ENCODE measurements at regions of chr17 and their contacts with region 1.

Region 1: GRCh38 chr17:77444984-77445759 is 304.4 kb downstream of the SEC14L1 start:
- DNase-seq: peak; percentile 68 to 96 (median 94)
- ATAC-seq: peak; percentile 84
- H3K4me3 ChIP-seq: peak overlapping the region; percentile 57
- H3K4me3 Mint-ChIP-seq: peak overlapping the region; percentile 77 to 98 (median 86)
- H3K27ac ChIP-seq: peak overlapping the region; percentile 92
- H3K27ac Mint-ChIP-seq: peak overlapping the region; percentile 93 to 100 (median 99)
- H3K4me1 ChIP-seq: peaks cover 90 to 91% of the 10 kb centered on the region in 2 donors
- H3K4me1 Mint-ChIP-seq: peaks cover 73 to 99% (median 93%) of the 10 kb centered on the region in 7 donors
- H3K27me3 ChIP-seq: no peaks in the 10 kb centered on the region
- H3K27me3 Mint-ChIP-seq: no peaks in the 10 kb centered on the region

Region 2: GRCh38 chr17:77404812-77405581 is 40.2 kb before region 1 on chr17:
- CTCF ChIA-PET with region 1: interaction called, 11 read pairs
- POLR2A ChIA-PET with region 1: interaction called, 3,353 read pairs
- intact Hi-C with region 1: loop called (anchors 1 to 2 kb)
- DNase-seq: peak; percentile 48 to 86 (median 84)
- ATAC-seq: peak; percentile 88
- H3K4me3 ChIP-seq: peak overlapping the region; percentile 66
- H3K4me3 Mint-ChIP-seq: peak overlapping the region; percentile 83 to 100 (median 95)
- H3K27ac ChIP-seq: peak overlapping the region; percentile 81
- H3K27ac Mint-ChIP-seq: peak overlapping the region; percentile 95 to 100 (median 97)
- H3K4me1 ChIP-seq: peaks cover 89 to 91% of the 10 kb centered on the region in 2 donors
- H3K4me1 Mint-ChIP-seq: peaks cover 71 to 97% (median 87%) of the 10 kb centered on the region in 7 donors
- H3K27me3 ChIP-seq: no peaks in the 10 kb centered on the region
- H3K27me3 Mint-ChIP-seq: no peaks in the 10 kb centered on the region

Region 3: DNA sequence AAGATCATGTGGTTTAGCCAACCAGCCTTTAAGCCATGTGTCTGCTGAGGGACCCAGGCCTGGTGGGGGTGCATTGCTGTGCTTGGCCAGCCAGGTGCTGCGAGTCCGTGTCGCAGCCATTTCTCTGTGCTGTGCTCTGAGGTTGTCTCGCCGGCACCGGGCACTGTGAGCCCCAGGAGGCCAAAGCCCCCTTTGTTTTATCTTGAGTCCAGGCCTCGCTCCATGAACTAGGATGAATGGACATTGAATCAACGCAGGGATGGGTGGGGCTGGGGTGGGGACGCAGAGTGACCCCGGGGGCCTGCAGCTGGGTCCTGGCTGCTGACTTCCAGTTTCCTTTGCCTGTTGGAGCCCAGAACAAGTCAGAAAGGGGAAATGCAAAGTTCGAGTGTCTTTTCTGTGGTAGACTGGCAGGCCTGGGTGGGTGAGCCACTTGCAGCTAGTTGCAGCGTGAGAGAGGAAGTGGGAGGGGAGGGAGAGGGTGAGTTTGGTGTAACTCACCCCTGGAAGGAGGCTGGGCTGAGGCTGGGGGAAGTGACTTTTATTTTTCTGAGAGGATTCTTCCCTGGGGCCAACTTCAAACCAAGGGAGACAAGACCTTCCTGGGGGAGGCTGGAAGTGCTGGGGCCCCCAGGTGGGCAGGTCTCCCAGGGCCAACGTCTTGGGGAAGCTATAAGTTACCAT is 20.3 kb after region 1 on chr17:
- CTCF ChIA-PET with region 1: interaction called, 11 read pairs
- POLR2A ChIA-PET with region 1: interaction called, 678 read pairs
- intact Hi-C with region 1: loop called in 1 of 2 experiments (anchors 1 kb)
- DNase-seq: peak in 8 of 9 donors; percentile 67 to 89 (median 87)
- ATAC-seq: peak; percentile 97
- H3K4me3 ChIP-seq: peak overlapping the region; percentile 54
- H3K4me3 Mint-ChIP-seq: peak overlapping the region; percentile 79 to 87 (median 84)
- H3K27ac ChIP-seq: peak overlapping the region; percentile 64
- H3K27ac Mint-ChIP-seq: peak overlapping the region; percentile 88 to 100 (median 94)
- H3K4me1 ChIP-seq: peaks cover 88 to 90% of the 10 kb centered on the region in 2 donors
- H3K4me1 Mint-ChIP-seq: peaks cover 74 to 96% (median 86%) of the 10 kb centered on the region in 7 donors
- H3K27me3 ChIP-seq: no peaks in the 10 kb centered on the region
- H3K27me3 Mint-ChIP-seq: no peaks in the 10 kb centered on the region

Region 4: GRCh38 chr17:77666881-77667395 is 221.8 kb after region 1 on chr17:
- CTCF ChIA-PET with region 1: no interaction called
- POLR2A ChIA-PET with region 1: interaction called, 3 read pairs
- intact Hi-C with region 1: loop called (anchors 5 kb)
- DNase-seq: peak; percentile 37 to 87 (median 83)
- ATAC-seq: peak; percentile 90
- H3K4me3 ChIP-seq: peak overlapping the region; percentile 55
- H3K4me3 Mint-ChIP-seq: peak overlapping the region; percentile 80 to 97 (median 93)
- H3K27ac ChIP-seq: peak overlapping the region; percentile 75
- H3K27ac Mint-ChIP-seq: peak overlapping the region; percentile 96 to 99 (median 98)
- H3K4me1 ChIP-seq: peaks cover 26 to 40% of the 10 kb centered on the region in 2 donors
- H3K4me1 Mint-ChIP-seq: peaks cover 37 to 74% (median 64%) of the 10 kb centered on the region in 7 donors
- H3K27me3 ChIP-seq: no peaks in the 10 kb centered on the region
- H3K27me3 Mint-ChIP-seq: no peaks in the 10 kb centered on the region

Region 5: GRCh38 chr17:78128551-78129350 is 683.6 kb after region 1 on chr17 and contains the start of gene TMC6:
- CTCF ChIA-PET with region 1: no interaction called
- POLR2A ChIA-PET with region 1: interaction called, 15 read pairs
- intact Hi-C with region 1: loop called (anchors 5 kb)
- DNase-seq: peak in 8 of 9 donors; percentile 76 to 88 (median 82)
- ATAC-seq: peak; percentile 45
- H3K4me3 ChIP-seq: peak within 1 kb of the TSS; percentile 95
- H3K4me3 Mint-ChIP-seq: peak within 1 kb of the TSS; percentile 89 to 100 (median 99)
- H3K27ac ChIP-seq: peak within 1 kb of the TSS; percentile 77
- H3K27ac Mint-ChIP-seq: peak within 1 kb of the TSS; percentile 95 to 99 (median 97)
- H3K4me1 ChIP-seq: peaks cover 56 to 59% of the 10 kb centered on the region in 2 donors
- H3K4me1 Mint-ChIP-seq: peaks cover 19 to 53% (median 39%) of the 10 kb centered on the region in 7 donors
- H3K27me3 ChIP-seq: no peaks in the 10 kb centered on the region
- H3K27me3 Mint-ChIP-seq: peaks cover 0 to 3% (median 0%) of the 10 kb centered on the region in 5 donors
- total RNA-seq, gene TMC6: 574 to 808 (median 773) TPM

Region 6: GRCh38 chr17:78759203-78759968 is 1314.2 kb after region 1 on chr17:
- CTCF ChIA-PET with region 1: no interaction called
- POLR2A ChIA-PET with region 1: no interaction called
- intact Hi-C with region 1: loop called in 1 of 2 experiments (anchors 10 kb)
- DNase-seq: peak; percentile 56 to 96 (median 93)
- ATAC-seq: peak; percentile 91
- H3K4me3 ChIP-seq: peak overlapping the region; percentile 53
- H3K4me3 Mint-ChIP-seq: peak overlapping the region; percentile 64 to 85 (median 80)
- H3K27ac ChIP-seq: peak overlapping the region; percentile 93
- H3K27ac Mint-ChIP-seq: peak overlapping the region; percentile 83 to 98 (median 97)
- H3K4me1 ChIP-seq: peaks cover 75 to 77% of the 10 kb centered on the region in 2 donors
- H3K4me1 Mint-ChIP-seq: peaks cover 43 to 88% (median 83%) of the 10 kb centered on the region in 7 donors
- H3K27me3 ChIP-seq: no peaks in the 10 kb centered on the region
- H3K27me3 Mint-ChIP-seq: no peaks in the 10 kb centered on the region